GM10248 (cell line): ENCODE measurements at regions of chr4 and their contacts with region 1.

Region 1: DNA sequence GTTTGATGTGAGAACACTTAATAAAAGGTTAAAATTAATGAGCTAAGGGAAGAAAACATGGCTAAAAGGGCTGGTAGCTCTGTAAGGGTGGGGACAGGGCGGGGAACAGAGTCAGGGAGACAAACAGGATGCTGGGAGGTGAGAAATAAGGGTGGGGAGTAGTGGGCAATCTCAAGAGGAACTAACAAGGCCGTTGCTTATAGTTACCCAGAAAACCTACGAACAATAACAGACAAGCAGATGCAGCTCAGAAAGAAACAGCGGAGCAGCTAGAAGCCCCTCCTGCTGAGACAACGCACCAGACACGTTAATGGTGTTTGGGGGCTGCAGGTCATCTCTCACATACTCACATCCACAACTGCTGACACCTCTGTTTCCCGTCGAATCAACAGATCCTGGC is 9.7 kb upstream of the KLF3 start:
- DNase-seq: no peak
- CTCF ChIP-seq: no peak

Region 2: GRCh38 chr4:38449506-38450174 is 204.6 kb before region 1 on chr4:
- CTCF ChIA-PET with region 1: no interaction called
- POLR2A ChIA-PET with region 1: no interaction called
- DNase-seq: no peak
- CTCF ChIP-seq: no peak

Region 3: GRCh38 chr4:38534344-38535045 is 119.8 kb before region 1 on chr4:
- CTCF ChIA-PET with region 1: no interaction called
- POLR2A ChIA-PET with region 1: no interaction called
- DNase-seq: no peak
- CTCF ChIP-seq: no peak

Region 4: GRCh38 chr4:38641811-38642210 is 12.5 kb before region 1 on chr4:
- CTCF ChIA-PET with region 1: interaction called, 12 read pairs
- POLR2A ChIA-PET with region 1: no interaction called
- DNase-seq: no peak
- CTCF ChIP-seq: no peak

Region 5: DNA sequence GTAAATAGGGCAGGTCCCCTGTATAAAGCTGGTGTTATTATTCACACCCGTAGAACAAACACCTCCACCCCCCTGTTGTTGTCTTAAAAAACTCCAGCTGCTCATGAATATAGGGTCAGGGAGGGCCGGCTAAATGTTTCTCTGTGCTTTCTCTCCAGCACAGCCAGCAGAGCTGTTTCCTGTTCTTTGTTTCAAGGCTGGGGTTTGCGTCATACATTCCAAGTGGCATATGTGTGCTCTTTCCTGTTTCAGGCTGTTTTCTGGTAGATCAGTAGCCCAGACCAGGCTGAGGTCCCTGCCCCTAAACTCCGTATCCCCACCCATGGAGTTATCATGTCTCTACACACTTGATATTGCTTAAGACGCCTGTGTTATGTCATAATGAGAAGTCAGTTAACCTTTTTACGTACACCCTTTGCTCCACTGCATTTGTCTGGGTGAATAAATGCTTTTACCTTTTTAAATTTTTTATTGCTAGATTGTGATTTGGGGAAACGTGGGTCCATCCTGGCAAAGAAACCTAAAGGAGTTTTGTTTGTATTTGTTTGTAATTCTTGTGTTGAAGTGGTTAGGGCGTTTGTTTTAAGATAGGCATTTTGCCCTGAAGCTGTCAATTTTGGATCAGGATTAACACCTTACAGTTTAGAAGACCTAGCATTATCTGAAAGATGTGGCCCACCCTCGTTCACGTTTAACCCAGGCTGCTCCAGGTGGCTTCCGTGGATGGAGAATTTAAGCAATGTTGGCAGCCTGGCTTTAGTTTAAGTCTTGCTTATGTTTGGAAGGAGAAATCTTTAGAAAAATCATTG is 13.0 kb after region 1 on chr4:
- CTCF ChIA-PET with region 1: no interaction called
- POLR2A ChIA-PET with region 1: no interaction called
- DNase-seq: peak; percentile 33
- CTCF ChIP-seq: no peak